ENCODE measurements at regions of chr3 and their contacts with region 1.

Region 1: DNA sequence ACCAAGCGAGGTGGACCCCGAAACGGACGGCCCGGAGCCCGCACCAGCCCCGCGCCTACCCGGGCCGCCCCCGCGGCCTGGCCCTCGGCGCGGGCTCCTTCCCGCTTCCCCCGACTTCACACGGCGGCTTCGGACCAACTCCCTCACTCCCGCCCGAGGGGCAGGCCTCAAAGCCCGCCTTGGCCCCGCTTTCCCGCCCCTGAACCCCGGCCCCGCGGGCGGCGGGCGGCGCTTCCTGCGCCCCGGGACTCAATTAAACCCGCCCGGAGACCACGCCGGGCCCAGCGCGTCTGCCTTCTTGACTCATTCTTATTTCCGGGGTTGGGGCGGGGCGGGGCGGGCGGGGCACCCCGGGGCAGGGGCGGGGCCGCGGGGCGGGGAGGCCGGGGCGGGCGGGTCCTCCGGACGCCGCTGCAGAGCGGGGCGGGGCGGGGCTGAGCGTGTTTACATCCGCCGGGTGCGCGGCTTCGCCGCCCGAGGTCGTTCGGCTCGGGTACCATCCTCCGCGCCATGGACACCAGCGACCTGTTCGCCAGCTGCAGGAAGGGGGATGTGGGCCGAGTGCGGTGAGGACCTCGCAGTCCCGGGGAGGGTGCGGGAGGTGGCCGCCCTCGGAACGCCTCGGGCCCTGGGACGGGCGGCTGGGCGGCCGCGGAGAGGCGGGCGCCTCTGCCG is at the start of gene ABTB1:
- DNase-seq: peak; percentile 74 to 92 (median 87)
- ATAC-seq: peak; percentile 83
- H3K4me3 ChIP-seq: peak within 1 kb of the TSS; percentile 71 to 87
- H3K4me3 Mint-ChIP-seq: peak within 1 kb of the TSS; percentile 93
- H3K27ac ChIP-seq: peak within 1 kb of the TSS; percentile 80 to 92
- H3K27ac Mint-ChIP-seq: peak within 1 kb of the TSS; percentile 99
- H3K4me1 ChIP-seq: peaks cover 31% of the 10 kb centered on the region
- H3K4me1 Mint-ChIP-seq: peaks cover 31% of the 10 kb centered on the region
- H3K27me3 ChIP-seq: no peaks in the 10 kb centered on the region
- H3K27me3 Mint-ChIP-seq: no peaks in the 10 kb centered on the region
- CTCF ChIP-seq: no peak
- total RNA-seq, gene ABTB1: 86.0 to 88.1 TPM

Region 2: DNA sequence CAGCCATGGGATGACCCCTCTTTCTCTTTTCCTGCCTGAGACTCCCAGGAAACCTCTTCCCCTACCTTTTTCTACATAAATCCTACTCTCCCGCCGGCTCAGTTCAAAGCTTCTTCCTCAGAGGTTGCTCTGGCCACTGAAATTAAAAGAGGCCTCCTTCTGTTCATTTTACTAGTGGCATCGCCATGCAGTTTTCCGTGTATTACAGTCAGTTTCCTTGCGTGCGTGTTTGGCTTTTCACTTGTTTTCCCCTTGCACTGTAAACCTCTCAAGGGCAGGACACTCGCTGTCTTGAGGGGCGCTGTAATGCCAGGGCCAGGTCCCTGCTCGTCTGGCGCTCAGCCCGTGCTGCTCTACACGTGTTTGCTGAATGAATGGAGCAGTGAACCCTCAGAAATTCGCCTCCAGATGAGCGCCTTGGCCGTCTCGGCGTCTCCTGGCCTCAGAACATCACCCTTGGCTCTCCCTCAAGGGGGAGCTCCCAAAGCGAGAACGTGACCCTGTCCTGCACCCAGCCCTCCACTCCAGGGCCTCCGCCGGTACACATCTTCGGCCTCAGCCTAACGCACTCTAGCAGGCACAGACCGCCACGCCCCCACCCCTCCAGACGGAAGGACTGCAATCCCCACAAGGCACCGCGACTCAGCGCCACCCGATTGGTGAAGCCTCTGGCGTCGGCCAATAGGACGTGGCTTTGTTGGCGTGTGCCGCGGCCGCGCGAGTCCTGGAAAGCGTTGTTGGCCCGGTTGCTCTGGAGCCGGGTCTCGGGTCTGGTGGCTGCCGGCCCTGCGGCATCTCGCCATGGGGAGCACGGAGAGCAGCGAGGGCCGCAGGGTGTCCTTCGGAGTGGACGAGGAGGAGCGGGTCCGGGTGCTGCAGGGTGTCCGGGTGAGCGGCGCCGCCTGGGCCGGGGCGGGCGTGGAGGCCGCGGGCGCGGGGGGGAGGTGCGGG is 968.9 kb before region 1 on chr3 and contains the start of gene CHCHD6:
- CTCF ChIA-PET with region 1: no interaction called
- POLR2A ChIA-PET with region 1: no interaction called
- intact Hi-C with region 1: loop called (anchors 5 kb)
- DNase-seq: peak; percentile 92 to 99 (median 96)
- ATAC-seq: peak; percentile 93
- H3K4me3 ChIP-seq: peak within 1 kb of the TSS; percentile 74 to 75
- H3K4me3 Mint-ChIP-seq: peak within 1 kb of the TSS; percentile 98
- H3K27ac ChIP-seq: peak within 1 kb of the TSS in 1 of 2 experiments; percentile 36
- H3K27ac Mint-ChIP-seq: peak within 1 kb of the TSS; percentile 88
- H3K4me1 ChIP-seq: peaks cover 17% of the 10 kb centered on the region
- H3K4me1 Mint-ChIP-seq: peaks cover 22% of the 10 kb centered on the region
- H3K27me3 ChIP-seq: no peaks in the 10 kb centered on the region
- H3K27me3 Mint-ChIP-seq: peaks cover 15% of the 10 kb centered on the region
- CTCF ChIP-seq: no peak
- total RNA-seq, gene CHCHD6: 6.2 to 6.4 TPM

Region 3: DNA sequence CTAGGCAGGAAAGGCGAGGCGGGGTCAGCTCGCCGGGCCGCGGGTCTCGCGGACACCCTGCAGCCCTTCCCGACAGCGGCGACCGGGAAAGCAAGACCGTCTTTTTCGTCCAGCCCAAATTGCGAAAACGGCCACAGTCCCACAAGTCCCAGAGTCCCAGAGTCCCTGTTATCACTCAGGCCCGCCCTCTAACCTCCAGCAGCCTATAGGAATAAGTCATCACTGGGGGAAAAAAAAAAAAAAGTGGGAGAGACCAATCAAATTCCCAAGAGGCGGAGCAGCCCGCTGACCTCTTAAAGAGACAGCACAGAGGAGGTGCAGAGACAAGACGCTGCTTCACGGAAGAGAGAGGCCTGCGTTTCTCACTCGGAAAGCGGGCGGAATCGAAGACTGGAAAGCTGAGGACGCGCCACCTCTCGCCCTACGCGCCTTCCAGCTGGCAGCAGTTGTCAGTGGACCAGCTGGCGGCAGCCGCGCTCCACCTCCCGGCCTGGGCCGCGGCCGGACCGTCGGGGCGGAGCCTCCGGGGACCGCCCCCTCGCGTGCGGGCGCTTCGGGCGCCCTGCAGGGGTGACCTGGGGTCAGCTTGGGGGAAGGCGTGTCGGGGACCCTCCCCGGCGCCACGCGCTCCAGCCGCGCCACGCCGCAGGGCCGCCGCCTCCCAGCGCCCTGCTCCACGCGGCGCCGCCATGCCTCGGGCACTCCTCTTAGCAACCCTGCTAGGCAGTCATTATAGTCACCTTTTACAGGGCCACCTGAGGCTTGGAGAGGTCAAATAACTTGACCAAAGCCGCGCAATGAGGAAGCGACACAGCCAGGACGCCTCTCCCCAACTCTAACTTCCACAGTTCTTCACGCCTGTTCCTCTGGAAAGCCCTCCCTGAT is 81.8 kb before region 1 on chr3 and contains the start of gene TPRA1:
- CTCF ChIA-PET with region 1: no interaction called
- POLR2A ChIA-PET with region 1: interaction called, 11 read pairs
- intact Hi-C with region 1: loop called in 1 of 2 experiments (anchors 1 kb)
- DNase-seq: peak; percentile 46 to 94 (median 79)
- ATAC-seq: peak; percentile 86
- H3K4me3 ChIP-seq: peak within 1 kb of the TSS; percentile 75 to 81
- H3K4me3 Mint-ChIP-seq: peak within 1 kb of the TSS; percentile 97
- H3K27ac ChIP-seq: peak within 1 kb of the TSS; percentile 68 to 74
- H3K27ac Mint-ChIP-seq: peak within 1 kb of the TSS; percentile 91
- H3K4me1 ChIP-seq: peaks cover 20% of the 10 kb centered on the region
- H3K4me1 Mint-ChIP-seq: peaks cover 35% of the 10 kb centered on the region
- H3K27me3 ChIP-seq: no peaks in the 10 kb centered on the region
- H3K27me3 Mint-ChIP-seq: no peaks in the 10 kb centered on the region
- CTCF ChIP-seq: no peak
- total RNA-seq, gene TPRA1: 6.0 to 6.1 TPM

Region 4: DNA sequence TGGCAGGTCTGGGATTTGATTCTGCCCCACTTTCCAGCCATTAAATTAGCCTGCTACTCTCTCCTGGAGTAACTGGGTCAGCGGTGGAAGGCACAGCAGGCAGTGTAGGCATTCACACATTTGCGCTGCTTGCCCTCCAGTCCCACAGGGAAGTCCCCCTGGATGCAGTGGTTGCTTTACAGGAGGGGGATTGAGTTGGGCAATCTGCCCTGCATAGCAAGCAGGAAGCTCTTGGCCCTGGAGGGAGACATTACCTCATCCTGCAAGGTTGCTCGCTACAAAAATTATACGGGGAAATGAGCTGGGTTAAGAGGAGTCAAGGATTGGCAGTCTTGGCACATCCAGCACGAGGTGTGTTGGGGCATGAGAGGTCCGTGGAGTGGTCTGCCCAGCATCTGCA is 59.7 kb before region 1 on chr3:
- CTCF ChIA-PET with region 1: no interaction called
- POLR2A ChIA-PET with region 1: no interaction called
- intact Hi-C with region 1: no loop called
- DNase-seq: no peak
- ATAC-seq: no peak
- H3K4me3 ChIP-seq: no peak overlapping the region
- H3K4me3 Mint-ChIP-seq: no peak overlapping the region
- H3K27ac ChIP-seq: no peak overlapping the region
- H3K27ac Mint-ChIP-seq: no peak overlapping the region
- H3K4me1 ChIP-seq: no peaks in the 10 kb centered on the region
- H3K4me1 Mint-ChIP-seq: no peaks in the 10 kb centered on the region
- H3K27me3 ChIP-seq: no peaks in the 10 kb centered on the region
- H3K27me3 Mint-ChIP-seq: no peaks in the 10 kb centered on the region
- CTCF ChIP-seq: no peak

Region 5: GRCh38 chr3:127628788-127629466 is 43.7 kb before region 1 on chr3 and contains the start of gene PODXL2:
- CTCF ChIA-PET with region 1: no interaction called
- POLR2A ChIA-PET with region 1: interaction called, 6 read pairs
- intact Hi-C with region 1: loop called in 1 of 2 experiments (anchors 2 kb)
- DNase-seq: peak in 7 of 9 experiments; percentile 5 to 70 (median 27)
- ATAC-seq: peak; percentile 27
- H3K4me3 ChIP-seq: peak within 1 kb of the TSS; percentile 40 to 54
- H3K4me3 Mint-ChIP-seq: peak within 1 kb of the TSS; percentile 89
- H3K27ac ChIP-seq: no peak within 1 kb of the TSS
- H3K27ac Mint-ChIP-seq: peak within 1 kb of the TSS; percentile 83
- H3K4me1 ChIP-seq: peaks cover 14% of the 10 kb centered on the region
- H3K4me1 Mint-ChIP-seq: peaks cover 40% of the 10 kb centered on the region
- H3K27me3 ChIP-seq: peaks cover 2 to 9% of the 10 kb centered on the region in 2 experiments
- H3K27me3 Mint-ChIP-seq: peaks cover 37% of the 10 kb centered on the region
- CTCF ChIP-seq: no peak
- total RNA-seq, gene PODXL2: 2.7 to 3.2 TPM

Region 6: GRCh38 chr3:128051837-128052594 is 379.4 kb after region 1 on chr3 and contains the start of gene SEC61A1:
- CTCF ChIA-PET with region 1: no interaction called
- POLR2A ChIA-PET with region 1: no interaction called
- intact Hi-C with region 1: loop called (anchors 1 kb)
- DNase-seq: peak; percentile 87 to 97 (median 95)
- ATAC-seq: peak; percentile 93
- H3K4me3 ChIP-seq: peak within 1 kb of the TSS; percentile 92 to 95
- H3K4me3 Mint-ChIP-seq: peak within 1 kb of the TSS; percentile 99
- H3K27ac ChIP-seq: peak within 1 kb of the TSS; percentile 78 to 85
- H3K27ac Mint-ChIP-seq: peak within 1 kb of the TSS; percentile 98
- H3K4me1 ChIP-seq: peaks cover 35% of the 10 kb centered on the region
- H3K4me1 Mint-ChIP-seq: peaks cover 43% of the 10 kb centered on the region
- H3K27me3 ChIP-seq: no peaks in the 10 kb centered on the region
- H3K27me3 Mint-ChIP-seq: no peaks in the 10 kb centered on the region
- CTCF ChIP-seq: no peak
- total RNA-seq, gene SEC61A1: 125 to 131 TPM

Region 7: GRCh38 chr3:128153156-128154041 is 480.7 kb after region 1 on chr3 and contains the start of gene EEFSEC:
- CTCF ChIA-PET with region 1: no interaction called
- POLR2A ChIA-PET with region 1: no interaction called
- intact Hi-C with region 1: loop called in 1 of 2 experiments (anchors 10 kb)
- DNase-seq: peak; percentile 77 to 92 (median 84)
- ATAC-seq: peak; percentile 90
- H3K4me3 ChIP-seq: peak within 1 kb of the TSS; percentile 61 to 74
- H3K4me3 Mint-ChIP-seq: peak within 1 kb of the TSS; percentile 87
- H3K27ac ChIP-seq: peak within 1 kb of the TSS; percentile 65 to 77
- H3K27ac Mint-ChIP-seq: peak within 1 kb of the TSS; percentile 89
- H3K4me1 ChIP-seq: peaks cover 14% of the 10 kb centered on the region
- H3K4me1 Mint-ChIP-seq: peaks cover 42% of the 10 kb centered on the region
- H3K27me3 ChIP-seq: no peaks in the 10 kb centered on the region
- H3K27me3 Mint-ChIP-seq: no peaks in the 10 kb centered on the region
- CTCF ChIP-seq: no peak
- total RNA-seq, gene EEFSEC: 10.8 to 11.6 TPM